ENCODE measurements at regions of chr11 and their contacts with region 1.

Region 1: DNA sequence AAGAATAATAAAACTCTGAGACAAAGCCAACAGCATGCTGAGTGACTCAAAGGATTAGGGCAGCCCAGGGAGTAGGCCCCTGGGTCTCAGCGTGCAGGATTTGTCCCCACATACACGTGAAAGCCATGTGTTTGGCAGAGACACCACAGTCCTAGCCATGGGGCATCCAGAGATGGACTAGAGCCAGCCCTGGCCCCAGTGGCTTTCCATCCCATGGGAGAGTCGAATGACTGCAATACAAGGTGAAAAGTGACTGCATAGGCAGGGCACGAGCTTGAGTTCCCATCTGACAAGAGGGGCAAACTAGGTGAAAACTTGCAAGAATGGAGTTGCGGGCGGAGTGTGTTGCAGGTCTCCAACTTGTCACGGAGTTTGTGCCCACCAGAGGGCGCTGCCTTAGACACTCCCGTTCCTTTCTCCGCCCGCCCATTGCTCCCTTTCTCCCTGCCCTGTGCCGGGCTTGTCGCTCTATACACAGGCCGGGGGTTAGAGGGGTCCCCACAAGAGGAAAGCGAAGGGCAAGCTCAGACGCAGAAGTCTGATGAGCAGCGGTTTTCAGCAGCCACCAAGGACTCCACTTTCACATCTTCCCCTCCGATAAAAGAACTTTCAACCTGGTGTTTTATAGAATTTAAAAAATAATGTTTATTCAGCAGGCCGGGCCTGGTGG is 24.2 kb downstream of the TSKU start:
- DNase-seq: peak in 33 of 35 experiments; percentile 23 to 78 (median 53)
- ATAC-seq: peak; percentile 46 to 65 (median 60)
- H3K4me3 ChIP-seq: no peak overlapping the region
- H3K4me3 Mint-ChIP-seq: no peak overlapping the region
- H3K27ac ChIP-seq: no peak overlapping the region
- H3K27ac Mint-ChIP-seq: no peak overlapping the region
- H3K4me1 ChIP-seq: peaks cover 13 to 32% of the 10 kb centered on the region in 2 experiments
- H3K4me1 Mint-ChIP-seq: peaks cover 26 to 34% (median 30%) of the 10 kb centered on the region in 3 donors
- H3K27me3 ChIP-seq: peaks cover 0 to 37% of the 10 kb centered on the region in 2 experiments
- H3K27me3 Mint-ChIP-seq: peaks cover 4 to 34% of the 10 kb centered on the region in 2 donors

Region 2: GRCh38 chr11:76838678-76839068 is 31.3 kb after region 1 on chr11:
- CTCF ChIA-PET with region 1: no interaction called
- POLR2A ChIA-PET with region 1: interaction called in 1 of 2 experiments, 10 read pairs
- DNase-seq: no peak
- ATAC-seq: no peak
- H3K4me3 ChIP-seq: no peak overlapping the region
- H3K4me3 Mint-ChIP-seq: no peak overlapping the region
- H3K27ac ChIP-seq: no peak overlapping the region
- H3K27ac Mint-ChIP-seq: no peak overlapping the region
- H3K4me1 ChIP-seq: no peaks in the 10 kb centered on the region
- H3K4me1 Mint-ChIP-seq: no peaks in the 10 kb centered on the region
- H3K27me3 ChIP-seq: peaks cover 0 to 17% of the 10 kb centered on the region in 2 experiments
- H3K27me3 Mint-ChIP-seq: peaks cover 30 to 32% of the 10 kb centered on the region in 2 donors

Region 3: DNA sequence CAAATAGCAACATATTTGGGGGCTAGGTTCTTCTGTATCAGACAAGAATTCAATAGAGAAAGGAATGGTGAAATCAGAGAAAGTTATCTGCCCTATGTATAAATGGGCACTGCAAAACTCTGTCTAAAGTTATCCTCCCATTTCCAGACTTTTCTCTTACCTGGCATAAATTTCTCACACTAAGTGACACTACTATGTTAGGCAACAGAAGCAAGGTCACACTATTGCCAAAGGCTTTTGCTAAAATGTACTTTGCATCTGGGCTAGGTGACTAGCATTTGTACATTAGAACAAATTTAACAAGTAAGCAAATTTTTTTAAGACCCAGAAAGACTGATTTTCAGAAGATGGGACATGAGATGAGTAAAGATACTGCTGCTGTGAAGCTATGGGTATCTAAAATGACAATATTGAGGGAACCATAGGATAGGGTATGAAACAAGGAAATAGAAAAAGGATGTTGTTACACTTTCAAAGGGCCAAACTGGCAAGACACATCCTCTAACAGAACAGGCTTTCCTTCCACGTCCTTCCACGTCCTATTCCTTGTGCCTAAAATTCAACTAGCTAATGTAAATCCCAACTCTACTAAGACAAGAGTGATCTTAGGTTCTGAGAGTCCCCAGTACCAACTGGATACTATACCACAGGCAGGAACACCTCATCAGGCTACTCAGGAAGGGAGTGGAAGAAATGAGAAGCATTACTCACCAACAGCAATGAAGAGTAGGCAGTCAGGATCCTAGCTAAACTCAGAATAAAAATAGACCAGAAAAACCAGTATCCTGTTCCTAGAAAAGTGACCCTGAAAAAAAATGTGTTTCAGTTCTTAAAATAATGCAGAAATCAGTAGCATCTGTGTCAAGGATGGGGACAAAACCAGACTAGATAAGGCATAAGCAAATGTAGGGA is 471.5 kb after region 1 on chr11:
- CTCF ChIA-PET with region 1: interaction called in 1 of 2 experiments, 10 read pairs
- POLR2A ChIA-PET with region 1: no interaction called
- DNase-seq: no peak
- ATAC-seq: no peak
- H3K4me3 ChIP-seq: no peak overlapping the region
- H3K4me3 Mint-ChIP-seq: no peak overlapping the region
- H3K27ac ChIP-seq: no peak overlapping the region
- H3K27ac Mint-ChIP-seq: no peak overlapping the region
- H3K4me1 ChIP-seq: no peaks in the 10 kb centered on the region
- H3K4me1 Mint-ChIP-seq: no peaks in the 10 kb centered on the region
- H3K27me3 ChIP-seq: no peaks in the 10 kb centered on the region
- H3K27me3 Mint-ChIP-seq: peaks cover 14 to 23% of the 10 kb centered on the region in 2 donors